Activated B cell treated with CpG ODN at 0.5 μM for 24 hours (primary cell): ENCODE measurements at regions of chr7 and their contacts with region 1.

Region 1: DNA sequence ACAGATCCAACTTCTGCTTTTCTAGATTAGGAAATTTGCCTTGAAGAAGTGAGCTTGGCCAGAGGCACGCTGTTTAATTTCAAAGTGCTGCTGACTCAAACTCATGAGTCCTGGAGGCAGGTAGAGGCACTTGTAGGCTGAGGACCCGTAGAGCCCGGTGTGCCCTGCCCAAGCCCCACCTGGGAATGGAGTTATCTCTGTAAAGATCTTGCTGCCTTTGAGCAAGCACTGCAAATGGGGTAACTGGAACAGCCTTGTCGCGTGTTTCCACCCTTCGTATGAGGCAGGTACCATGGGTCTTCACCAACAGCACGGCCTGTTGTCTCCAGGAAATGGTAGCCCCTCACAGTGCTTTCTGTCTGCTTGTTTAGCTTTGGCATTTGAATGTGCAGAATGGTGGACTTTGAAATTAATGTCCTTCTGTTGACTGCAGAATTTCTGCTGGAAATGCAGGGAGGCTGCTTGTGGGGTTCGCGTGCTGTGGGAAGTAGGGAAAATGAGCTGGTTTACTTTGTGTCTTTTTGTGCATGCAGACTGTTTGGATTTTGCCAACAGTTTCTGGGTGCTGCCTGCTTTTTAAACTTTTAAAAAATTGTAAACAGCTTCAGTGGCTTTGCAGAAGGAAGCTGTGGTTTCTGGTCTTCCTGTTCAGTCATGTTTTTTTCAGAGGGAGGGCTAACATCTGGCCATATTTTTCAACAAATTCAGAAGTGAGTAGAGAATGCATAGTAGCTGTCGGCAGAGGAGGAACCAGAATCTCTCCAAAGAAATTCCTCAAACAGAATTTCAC is 27.2 kb downstream of the CCM2 start:
- DNase-seq: peak; percentile 41
- ATAC-seq: peak; percentile 75
- H3K4me3 Mint-ChIP-seq: peak overlapping the region; percentile 83
- H3K27ac Mint-ChIP-seq: peak overlapping the region; percentile 84
- H3K4me1 Mint-ChIP-seq: peaks cover 77% of the 10 kb centered on the region
- H3K27me3 Mint-ChIP-seq: no peaks in the 10 kb centered on the region
- CTCF ChIP-seq: no peak

Region 2: GRCh38 chr7:44973610-44974401 is 53.4 kb before region 1 on chr7:
- CTCF ChIA-PET with region 1: interaction called, 22 read pairs
- POLR2A ChIA-PET with region 1: interaction called, 105 read pairs
- intact Hi-C with region 1: loop called (anchors 1 kb)
- DNase-seq: no peak
- ATAC-seq: peak; percentile 26
- H3K4me3 Mint-ChIP-seq: no peak overlapping the region
- H3K27ac Mint-ChIP-seq: no peak overlapping the region
- H3K4me1 Mint-ChIP-seq: peaks cover 32% of the 10 kb centered on the region
- H3K27me3 Mint-ChIP-seq: no peaks in the 10 kb centered on the region
- CTCF ChIP-seq: no peak

Region 3: GRCh38 chr7:44980393-44981034 is 46.7 kb before region 1 on chr7:
- CTCF ChIA-PET with region 1: no interaction called
- POLR2A ChIA-PET with region 1: interaction called, 105 read pairs
- intact Hi-C with region 1: loop called (anchors 1 kb)
- DNase-seq: peak; percentile 56
- ATAC-seq: peak; percentile 63
- H3K4me3 Mint-ChIP-seq: peak overlapping the region; percentile 74
- H3K27ac Mint-ChIP-seq: peak overlapping the region; percentile 92
- H3K4me1 Mint-ChIP-seq: peaks cover 86% of the 10 kb centered on the region
- H3K27me3 Mint-ChIP-seq: no peaks in the 10 kb centered on the region
- CTCF ChIP-seq: no peak

Region 4: DNA sequence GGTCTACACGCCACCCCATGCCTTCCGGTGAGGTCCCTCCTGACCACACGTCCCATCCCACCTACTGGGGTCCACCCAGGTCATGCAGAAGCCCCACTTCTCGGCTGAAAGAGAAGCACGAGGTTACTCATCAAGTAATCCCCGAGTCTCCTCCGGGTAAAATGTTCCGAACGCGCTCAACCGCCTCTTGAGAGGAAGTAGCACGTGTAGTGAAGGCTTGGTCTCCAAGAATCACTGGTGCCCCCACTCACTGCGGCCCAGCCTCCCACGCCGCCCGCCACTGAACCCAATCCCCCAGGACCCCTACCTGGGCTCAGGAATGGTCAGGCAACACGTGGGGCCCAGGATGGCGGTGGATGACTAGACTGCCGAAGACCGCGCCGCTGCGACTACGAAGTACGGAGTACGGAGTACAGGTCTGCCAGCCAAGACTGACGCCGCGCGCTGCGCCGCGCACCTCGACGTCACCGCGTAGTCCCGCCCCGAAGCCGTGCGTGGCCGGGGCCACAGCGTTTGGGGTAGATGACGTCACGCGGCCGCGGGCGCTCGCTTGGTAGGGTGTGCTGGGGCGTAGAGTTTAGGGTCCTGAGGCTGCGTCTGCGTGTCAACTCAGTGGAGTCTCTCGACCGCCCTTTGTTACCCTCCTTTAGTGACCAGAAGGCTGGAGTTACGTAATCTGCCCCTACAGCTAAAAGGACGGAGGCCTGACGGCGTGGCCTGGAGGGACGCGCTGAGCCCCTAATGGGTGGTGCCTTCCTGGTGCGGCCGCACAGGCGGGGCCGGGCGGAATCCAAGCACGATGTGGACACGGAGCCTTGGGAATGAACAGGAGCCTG is 40.7 kb before region 1 on chr7:
- CTCF ChIA-PET with region 1: no interaction called
- POLR2A ChIA-PET with region 1: interaction called, 105 read pairs
- intact Hi-C with region 1: no loop called
- DNase-seq: peak; percentile 97
- ATAC-seq: peak; percentile 92
- H3K4me3 Mint-ChIP-seq: peak overlapping the region; percentile 98
- H3K27ac Mint-ChIP-seq: peak overlapping the region; percentile 98
- H3K4me1 Mint-ChIP-seq: peaks cover 58% of the 10 kb centered on the region
- H3K27me3 Mint-ChIP-seq: no peaks in the 10 kb centered on the region
- CTCF ChIP-seq: no peak

Region 5: DNA sequence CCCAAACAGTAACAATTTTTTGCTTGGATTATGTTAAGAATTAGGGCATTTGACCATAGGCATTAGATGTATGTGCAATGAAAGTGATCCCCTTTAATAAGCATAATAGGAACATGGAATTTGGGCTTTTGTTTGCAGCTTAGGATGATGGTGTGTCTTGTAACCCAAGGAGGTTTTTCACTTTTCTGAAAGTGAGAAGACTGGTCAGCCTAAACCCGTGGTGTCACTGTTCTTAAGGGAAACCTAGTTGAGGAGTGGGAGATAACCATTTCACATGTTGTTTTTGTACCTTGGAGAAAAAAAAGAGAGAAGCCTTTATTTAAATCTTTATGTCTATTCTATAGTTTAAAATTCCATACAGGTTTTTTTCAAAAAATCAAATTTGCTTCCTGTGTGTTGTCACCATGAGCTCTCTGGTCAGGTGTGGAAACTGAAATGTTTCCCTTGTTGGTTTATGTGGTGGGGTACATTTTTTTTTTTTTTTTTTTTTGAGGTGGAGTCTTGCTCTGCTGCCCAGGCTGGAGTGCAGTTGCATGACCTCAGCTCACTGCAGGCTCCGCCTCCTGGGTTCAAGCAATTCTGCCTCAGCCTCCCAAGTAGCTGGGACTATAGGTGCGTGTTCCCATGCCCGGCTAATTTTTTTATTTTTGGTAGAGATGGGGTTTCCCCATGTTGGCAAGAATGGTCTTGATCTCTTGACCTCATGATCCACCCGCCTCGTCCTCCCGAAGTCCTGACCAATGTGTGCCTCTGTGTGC is 19.4 kb before region 1 on chr7:
- CTCF ChIA-PET with region 1: no interaction called
- POLR2A ChIA-PET with region 1: interaction called, 129 read pairs
- intact Hi-C with region 1: loop called (anchors 2 kb)
- DNase-seq: no peak
- ATAC-seq: peak; percentile 75
- H3K4me3 Mint-ChIP-seq: peak overlapping the region; percentile 41
- H3K27ac Mint-ChIP-seq: peak overlapping the region; percentile 70
- H3K4me1 Mint-ChIP-seq: peaks cover 54% of the 10 kb centered on the region
- H3K27me3 Mint-ChIP-seq: no peaks in the 10 kb centered on the region
- CTCF ChIP-seq: no peak

Region 6: GRCh38 chr7:45057871-45058270 is 30.7 kb after region 1 on chr7:
- CTCF ChIA-PET with region 1: no interaction called
- POLR2A ChIA-PET with region 1: no interaction called
- intact Hi-C with region 1: loop called (anchors 2 kb)
- DNase-seq: no peak
- ATAC-seq: no peak
- H3K4me3 Mint-ChIP-seq: no peak overlapping the region
- H3K27ac Mint-ChIP-seq: no peak overlapping the region
- H3K4me1 Mint-ChIP-seq: peaks cover 63% of the 10 kb centered on the region
- H3K27me3 Mint-ChIP-seq: no peaks in the 10 kb centered on the region
- CTCF ChIP-seq: no peak

Region 7: GRCh38 chr7:45129181-45129800 is 102.1 kb after region 1 on chr7:
- CTCF ChIA-PET with region 1: no interaction called
- POLR2A ChIA-PET with region 1: no interaction called
- intact Hi-C with region 1: no loop called
- DNase-seq: no peak
- ATAC-seq: no peak
- H3K4me3 Mint-ChIP-seq: no peak overlapping the region
- H3K27ac Mint-ChIP-seq: no peak overlapping the region
- H3K4me1 Mint-ChIP-seq: no peaks in the 10 kb centered on the region
- H3K27me3 Mint-ChIP-seq: no peaks in the 10 kb centered on the region
- CTCF ChIP-seq: no peak